ENCODE measurements at regions of chr15 and their contacts with region 1.

Region 1: DNA sequence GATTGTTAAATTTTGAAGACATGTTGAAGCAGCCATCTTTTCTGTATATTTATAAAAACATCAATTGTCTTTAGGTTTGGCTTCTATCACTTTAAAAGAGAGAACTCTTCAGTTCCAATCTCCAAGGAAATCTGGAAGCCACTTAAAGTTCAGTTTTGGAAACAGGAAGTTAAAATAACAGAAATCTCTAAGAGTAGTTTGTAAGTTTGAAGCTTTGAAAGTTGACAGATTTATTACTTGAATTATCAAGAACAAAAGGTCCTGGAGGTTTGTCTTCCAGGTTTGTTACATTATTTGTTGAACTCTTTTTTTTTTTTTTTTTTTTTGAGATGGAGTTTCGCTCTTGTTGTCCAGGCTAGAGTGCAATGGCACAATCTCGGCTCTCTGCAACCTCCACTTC is 30.0 kb downstream of the RNF111 start:
- DNase-seq: no peak
- ATAC-seq: no peak
- H3K4me3 Mint-ChIP-seq: no peak overlapping the region
- H3K27ac Mint-ChIP-seq: no peak overlapping the region
- H3K4me1 Mint-ChIP-seq: peaks cover 26% of the 10 kb centered on the region
- H3K27me3 Mint-ChIP-seq: no peaks in the 10 kb centered on the region

Region 2: GRCh38 chr15:58805095-58805494 is 212.4 kb before region 1 on chr15:
- CTCF ChIA-PET with region 1: no interaction called
- POLR2A ChIA-PET with region 1: no interaction called
- intact Hi-C with region 1: no loop called
- DNase-seq: no peak
- ATAC-seq: no peak
- H3K4me3 Mint-ChIP-seq: no peak overlapping the region
- H3K27ac Mint-ChIP-seq: no peak overlapping the region
- H3K4me1 Mint-ChIP-seq: peaks cover 4% of the 10 kb centered on the region
- H3K27me3 Mint-ChIP-seq: no peaks in the 10 kb centered on the region

Region 3: DNA sequence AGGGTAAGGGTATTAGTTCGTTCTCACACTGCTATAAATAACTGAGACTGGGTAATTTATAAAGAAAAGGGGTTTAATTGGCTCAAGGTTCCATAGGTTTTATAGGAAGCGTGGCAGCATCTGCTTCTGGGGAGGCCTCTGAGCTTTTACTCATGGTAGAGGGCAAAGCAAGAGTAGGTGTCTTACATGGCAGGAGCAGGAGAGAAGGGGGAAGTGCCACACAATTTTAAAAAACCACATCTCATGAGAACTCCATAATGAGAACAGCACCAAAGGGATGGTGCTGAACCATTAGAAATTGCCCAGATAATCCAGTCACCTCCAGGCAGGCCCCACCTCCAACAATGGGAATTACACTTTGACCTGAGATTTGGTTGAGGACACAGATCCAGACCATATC is 17.8 kb before region 1 on chr15:
- CTCF ChIA-PET with region 1: interaction called, 5 read pairs
- POLR2A ChIA-PET with region 1: interaction called, 5 read pairs
- intact Hi-C with region 1: loop called in 1 of 2 experiments (anchors 2 kb)
- DNase-seq: no peak
- ATAC-seq: no peak
- H3K4me3 Mint-ChIP-seq: no peak overlapping the region
- H3K27ac Mint-ChIP-seq: no peak overlapping the region
- H3K4me1 Mint-ChIP-seq: peaks cover 37% of the 10 kb centered on the region
- H3K27me3 Mint-ChIP-seq: no peaks in the 10 kb centered on the region